Naive thymus-derived CD4-positive, alpha-beta T cell (primary cell): ENCODE measurements at regions of chr1 and their contacts with region 1.

Region 1: GRCh38 chr1:243596431-243597062 is 253.5 kb downstream of the AKT3 start:
- DNase-seq: peak in 1 of 9 donors; percentile 36
- ATAC-seq: peak; percentile 81
- H3K4me3 ChIP-seq: no peak overlapping the region
- H3K4me3 Mint-ChIP-seq: peak overlapping the region in 4 of 10 donors; percentile 6 to 73 (median 44)
- H3K27ac ChIP-seq: no peak overlapping the region
- H3K27ac Mint-ChIP-seq: peak overlapping the region in 5 of 9 donors; percentile 28 to 89 (median 40)
- H3K4me1 ChIP-seq: peaks cover 4 to 19% of the 10 kb centered on the region in 2 donors
- H3K4me1 Mint-ChIP-seq: peaks cover 23 to 48% (median 32%) of the 10 kb centered on the region in 7 donors
- H3K27me3 ChIP-seq: no peaks in the 10 kb centered on the region
- H3K27me3 Mint-ChIP-seq: no peaks in the 10 kb centered on the region

Region 2: GRCh38 chr1:243421784-243422183 is 174.8 kb before region 1 on chr1:
- CTCF ChIA-PET with region 1: no interaction called
- POLR2A ChIA-PET with region 1: no interaction called
- intact Hi-C with region 1: loop called in 1 of 2 experiments (anchors 2 kb)
- DNase-seq: peak in 8 of 9 donors; percentile 13 to 58 (median 39)
- ATAC-seq: peak; percentile 87
- H3K4me3 ChIP-seq: peak overlapping the region; percentile 6
- H3K4me3 Mint-ChIP-seq: peak overlapping the region; percentile 5 to 80 (median 62)
- H3K27ac ChIP-seq: no peak overlapping the region
- H3K27ac Mint-ChIP-seq: peak overlapping the region in 5 of 9 donors; percentile 1 to 81 (median 17)
- H3K4me1 ChIP-seq: peaks cover 9% of the 10 kb centered on the region in 2 donors
- H3K4me1 Mint-ChIP-seq: peaks cover 12 to 42% (median 22%) of the 10 kb centered on the region in 7 donors
- H3K27me3 ChIP-seq: no peaks in the 10 kb centered on the region
- H3K27me3 Mint-ChIP-seq: no peaks in the 10 kb centered on the region

Region 3: DNA sequence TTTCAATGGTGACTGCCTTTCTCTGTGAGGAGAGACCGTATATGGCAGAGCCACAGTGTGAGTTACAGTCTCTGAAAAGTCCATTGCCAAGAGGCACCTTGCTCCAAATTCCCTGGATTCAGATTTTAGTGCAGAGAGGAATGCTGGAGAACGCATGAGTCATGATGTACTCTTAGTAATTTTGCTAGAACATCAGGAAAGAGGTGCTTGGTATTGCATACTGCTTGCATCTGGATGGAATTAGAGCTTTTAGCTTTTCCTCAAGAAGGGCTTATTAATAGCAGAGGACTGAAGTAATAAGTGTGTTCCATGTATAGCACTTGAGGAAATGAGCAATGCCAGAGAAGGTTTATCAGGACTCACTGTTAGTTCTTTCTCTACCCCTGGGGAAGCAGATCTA is 294.0 kb after region 1 on chr1:
- CTCF ChIA-PET with region 1: no interaction called
- POLR2A ChIA-PET with region 1: no interaction called
- intact Hi-C with region 1: no loop called
- DNase-seq: no peak
- ATAC-seq: no peak
- H3K4me3 ChIP-seq: no peak overlapping the region
- H3K4me3 Mint-ChIP-seq: no peak overlapping the region
- H3K27ac ChIP-seq: no peak overlapping the region
- H3K27ac Mint-ChIP-seq: no peak overlapping the region
- H3K4me1 ChIP-seq: no peaks in the 10 kb centered on the region
- H3K4me1 Mint-ChIP-seq: no peaks in the 10 kb centered on the region
- H3K27me3 ChIP-seq: no peaks in the 10 kb centered on the region
- H3K27me3 Mint-ChIP-seq: peaks cover 0 to 4% (median 0%) of the 10 kb centered on the region in 5 donors